Gastrocnemius medialis (tissue), 4 donors: ENCODE measurements at regions of chr5 and their contacts with region 1.

Region 1: GRCh38 chr5:154754460-154755360 is 467 bp upstream of the LARP1 start:
- DNase-seq: peak; percentile 99 to 100
- ATAC-seq: peak; percentile 66 to 76
- H3K4me3 ChIP-seq: peak overlapping the region; percentile 88 to 97 (median 94)
- H3K27ac ChIP-seq: peak overlapping the region; percentile 99 to 100 (median 100)
- H3K4me1 ChIP-seq: peaks cover 37 to 42% of the 10 kb centered on the region in 2 donors
- H3K27me3 ChIP-seq: no peaks in the 10 kb centered on the region
- CTCF ChIP-seq: peak in 3 of 5 experiments; percentile 20 to 54 (median 29)
- POLR2A ChIP-seq: peak; percentile 78 to 90

Region 2: DNA sequence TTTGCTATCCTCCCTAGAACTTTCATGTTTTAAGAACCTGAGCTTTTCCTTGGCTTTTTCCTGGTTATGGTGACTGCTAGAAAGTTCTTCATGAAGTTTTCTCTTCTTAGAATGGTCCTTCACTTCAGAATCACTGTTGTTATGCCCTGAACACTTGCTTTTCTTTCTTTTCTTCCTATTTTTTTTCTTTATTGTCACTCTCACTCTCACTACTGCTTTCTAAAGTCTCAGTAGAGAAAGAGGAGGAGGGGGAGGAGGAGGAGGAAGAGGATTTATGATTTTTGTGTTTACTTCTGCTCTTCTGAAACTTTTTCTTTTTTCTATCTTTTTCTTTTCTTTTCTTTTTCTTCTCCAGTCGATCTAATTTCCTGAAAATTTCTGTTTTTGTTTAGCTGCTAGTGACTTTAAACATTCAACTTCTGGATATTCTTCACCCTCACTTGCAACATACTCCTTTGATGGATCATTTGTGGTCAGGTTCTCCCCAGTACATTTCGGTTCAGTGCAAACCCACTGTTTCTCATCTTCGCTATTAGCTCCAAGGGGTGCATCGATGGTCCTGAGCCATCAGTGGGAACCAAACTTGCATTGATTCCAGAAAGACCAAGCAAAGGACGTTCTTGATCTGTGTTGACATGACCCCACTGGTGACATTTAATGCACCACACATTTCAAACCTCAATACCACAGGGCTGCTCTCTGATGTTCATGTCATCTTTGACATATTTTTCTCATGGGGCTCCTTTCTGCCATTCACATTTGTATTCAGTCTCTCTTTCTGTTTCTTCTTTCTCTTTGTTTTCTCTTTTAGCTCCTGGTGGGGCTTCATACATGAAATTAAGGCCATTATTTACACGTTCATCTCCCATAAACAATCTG is 195.1 kb before region 1 on chr5:
- in situ Hi-C with region 1: no loop called
- intact Hi-C with region 1: no loop called
- DNase-seq: no peak
- ATAC-seq: no peak
- H3K4me3 ChIP-seq: no peak overlapping the region
- H3K27ac ChIP-seq: no peak overlapping the region
- H3K4me1 ChIP-seq: no peaks in the 10 kb centered on the region
- H3K27me3 ChIP-seq: no peaks in the 10 kb centered on the region
- CTCF ChIP-seq: no peak
- POLR2A ChIP-seq: no peak

Region 3: GRCh38 chr5:154683101-154683880 is 71.4 kb before region 1 on chr5:
- in situ Hi-C with region 1: loop called in 1 of 4 experiments (anchors 10 kb)
- intact Hi-C with region 1: loop called (anchors 1 kb)
- DNase-seq: no peak
- ATAC-seq: peak; percentile 32 to 42
- H3K4me3 ChIP-seq: peak overlapping the region; percentile 64 to 71 (median 68)
- H3K27ac ChIP-seq: peak overlapping the region; percentile 92 to 95 (median 95)
- H3K4me1 ChIP-seq: peaks cover 15 to 34% of the 10 kb centered on the region in 2 donors
- H3K27me3 ChIP-seq: no peaks in the 10 kb centered on the region
- CTCF ChIP-seq: no peak
- POLR2A ChIP-seq: no peak

Region 4: DNA sequence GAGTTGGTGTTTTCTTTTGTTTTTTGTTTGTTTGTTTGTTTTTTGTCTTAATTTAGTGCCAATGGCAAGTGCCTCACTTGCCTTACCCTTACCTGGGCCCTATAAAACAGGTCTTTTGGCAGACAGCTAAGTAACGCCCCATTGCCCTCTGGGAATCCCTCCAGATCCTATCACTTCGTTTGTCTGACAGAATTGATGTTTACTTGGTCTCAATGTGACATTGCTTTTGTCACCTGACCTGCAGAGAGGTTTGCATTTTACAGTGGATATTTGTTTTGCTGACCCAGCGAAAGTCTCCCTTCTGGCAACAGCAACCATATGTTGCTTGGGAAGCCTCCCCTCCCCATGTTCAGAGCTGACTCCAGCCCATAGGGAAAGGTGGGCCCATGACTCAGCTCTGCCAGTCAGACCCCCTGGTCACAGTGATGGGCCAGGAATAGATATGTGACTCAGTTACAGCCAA is 53.6 kb before region 1 on chr5:
- in situ Hi-C with region 1: no loop called
- intact Hi-C with region 1: no loop called
- DNase-seq: no peak
- ATAC-seq: peak; percentile 30 to 57
- H3K4me3 ChIP-seq: no peak overlapping the region
- H3K27ac ChIP-seq: peak overlapping the region; percentile 73 to 82 (median 78)
- H3K4me1 ChIP-seq: peaks cover 8 to 15% of the 10 kb centered on the region in 2 donors
- H3K27me3 ChIP-seq: no peaks in the 10 kb centered on the region
- CTCF ChIP-seq: no peak
- POLR2A ChIP-seq: no peak

Region 5: DNA sequence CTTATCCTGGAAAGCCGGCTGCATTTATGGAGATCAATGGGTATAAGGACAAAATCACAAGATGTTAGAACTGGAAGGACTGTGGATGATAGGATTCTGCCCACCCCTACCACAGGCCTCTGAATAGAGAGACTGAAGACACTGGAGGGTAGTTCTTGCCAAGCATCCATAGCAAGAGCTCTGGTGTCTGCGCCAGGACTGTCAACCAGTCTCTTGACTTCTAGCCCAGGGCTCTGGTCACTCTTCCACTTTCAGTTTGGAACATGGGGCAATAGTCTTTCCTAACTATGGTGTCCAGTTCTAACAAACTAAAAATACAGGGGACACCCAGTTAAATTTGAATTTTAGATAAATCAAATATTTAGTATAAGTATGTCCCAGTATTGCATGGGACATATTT is 23.8 kb after region 1 on chr5:
- in situ Hi-C with region 1: no loop called
- intact Hi-C with region 1: loop called (anchors 1 kb)
- DNase-seq: peak; percentile 78 to 92
- ATAC-seq: peak; percentile 86
- H3K4me3 ChIP-seq: peak overlapping the region in 2 of 4 donors; percentile 31 to 39
- H3K27ac ChIP-seq: peak overlapping the region; percentile 78 to 91 (median 90)
- H3K4me1 ChIP-seq: peaks cover 86 to 92% of the 10 kb centered on the region in 2 donors
- H3K27me3 ChIP-seq: no peaks in the 10 kb centered on the region
- CTCF ChIP-seq: no peak
- POLR2A ChIP-seq: no peak

Region 6: GRCh38 chr5:154878642-154879335 is 124.1 kb after region 1 on chr5:
- in situ Hi-C with region 1: no loop called
- intact Hi-C with region 1: no loop called
- DNase-seq: no peak
- ATAC-seq: no peak
- H3K4me3 ChIP-seq: no peak overlapping the region
- H3K27ac ChIP-seq: no peak overlapping the region
- H3K4me1 ChIP-seq: no peaks in the 10 kb centered on the region
- H3K27me3 ChIP-seq: no peaks in the 10 kb centered on the region
- CTCF ChIP-seq: no peak
- POLR2A ChIP-seq: no peak

Region 7: GRCh38 chr5:154940772-154941620 is 186.3 kb after region 1 on chr5 and contains the start of gene MRPL22:
- in situ Hi-C with region 1: no loop called
- intact Hi-C with region 1: loop called (anchors 2 kb)
- DNase-seq: peak; percentile 84 to 91
- ATAC-seq: peak; percentile 85 to 89
- H3K4me3 ChIP-seq: peak within 1 kb of the TSS; percentile 67 to 80 (median 70)
- H3K27ac ChIP-seq: peak within 1 kb of the TSS; percentile 73 to 85 (median 77)
- H3K4me1 ChIP-seq: peaks cover 38 to 49% of the 10 kb centered on the region in 2 donors
- H3K27me3 ChIP-seq: no peaks in the 10 kb centered on the region
- CTCF ChIP-seq: peak in 4 of 5 experiments; percentile 14 to 25 (median 23)
- POLR2A ChIP-seq: peak; percentile 32 to 53
- total RNA-seq, gene MRPL22: 13.6 to 22.5 (median 21.0) TPM